ENCODE measurements at regions of chr18 and their contacts with region 1.

Region 1: GRCh38 chr18:34809451-34810072 is 99.5 kb downstream of the DTNA start:
- H3K4me3 Mint-ChIP-seq: no peak overlapping the region
- H3K27ac Mint-ChIP-seq: no peak overlapping the region
- H3K4me1 Mint-ChIP-seq: no peaks in the 10 kb centered on the region
- H3K27me3 Mint-ChIP-seq: no peaks in the 10 kb centered on the region

Region 2: DNA sequence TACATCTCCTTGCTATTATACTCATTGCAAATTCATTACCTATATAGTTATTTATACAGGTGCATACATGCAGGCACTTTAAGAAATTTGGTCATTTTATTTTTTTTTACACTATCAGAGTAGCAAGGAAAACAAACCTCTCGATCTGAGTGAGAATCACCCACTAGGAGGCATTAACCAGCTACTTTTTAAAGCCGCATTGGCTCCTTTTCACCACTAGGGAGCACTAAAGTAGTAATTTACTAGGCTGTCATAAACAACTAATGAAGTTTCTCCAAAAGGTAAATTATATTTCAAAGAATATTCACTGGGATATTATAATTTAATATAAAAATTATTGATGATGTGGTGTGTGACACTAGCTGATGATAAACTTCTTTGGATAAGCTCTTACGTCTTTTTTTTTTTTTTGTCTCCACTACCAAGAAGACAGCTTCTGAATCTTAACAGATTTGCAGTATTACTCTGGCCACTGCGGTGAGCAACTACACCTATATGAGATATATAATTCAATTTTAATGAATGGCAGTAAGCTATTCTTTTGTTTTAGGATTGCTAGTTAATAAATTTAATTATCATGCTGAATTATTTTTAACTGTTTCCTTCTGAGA is 686.7 kb before region 1 on chr18:
- intact Hi-C with region 1: loop called (anchors 5 kb)
- H3K4me3 Mint-ChIP-seq: no peak overlapping the region
- H3K27ac Mint-ChIP-seq: no peak overlapping the region
- H3K4me1 Mint-ChIP-seq: no peaks in the 10 kb centered on the region
- H3K27me3 Mint-ChIP-seq: no peaks in the 10 kb centered on the region

Measured in dendritic cell treated with granulocyte-macrophage colony-stimulating factor and Interleukin-4, amounts not matched to agents 40 ng/mL and 50 ng/mL, for 4 days (primary cell).